ENCODE measurements at regions of chrX and their contacts with region 1.

Region 1: DNA sequence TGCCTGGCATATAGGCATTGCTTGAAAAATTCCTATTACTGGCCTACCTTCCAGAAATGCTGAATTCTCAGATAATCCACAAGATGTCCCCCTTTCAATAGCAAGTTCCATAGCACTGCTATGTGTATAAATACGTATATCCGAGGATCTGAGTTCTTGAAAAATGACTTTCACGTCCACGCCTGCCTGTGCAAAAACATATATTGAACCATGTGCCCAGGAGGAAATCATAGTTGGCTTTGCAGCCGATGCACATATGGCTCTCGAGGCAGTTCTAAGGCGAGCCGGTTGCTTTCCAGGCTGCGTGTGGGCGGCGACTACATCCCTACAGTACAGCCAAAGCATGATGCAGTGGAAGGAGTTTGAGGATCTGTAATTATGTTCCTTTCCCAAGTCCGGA is 55.4 kb upstream of the ESX1 start:
- DNase-seq: no peak
- H3K4me3 Mint-ChIP-seq: peak overlapping the region; percentile 51
- H3K27ac Mint-ChIP-seq: peak overlapping the region; percentile 56
- H3K4me1 Mint-ChIP-seq: peaks cover 17% of the 10 kb centered on the region
- H3K27me3 Mint-ChIP-seq: no peaks in the 10 kb centered on the region
- CTCF ChIP-seq: no peak

Region 2: GRCh38 chrX:104343428-104344129 is 33.5 kb after region 1 on chrX:
- CTCF ChIA-PET with region 1: interaction called, 3 read pairs
- intact Hi-C with region 1: loop called (anchors 1 kb)
- DNase-seq: peak; percentile 84
- H3K4me3 Mint-ChIP-seq: peak overlapping the region; percentile 20
- H3K27ac Mint-ChIP-seq: peak overlapping the region; percentile 87
- H3K4me1 Mint-ChIP-seq: peaks cover 50% of the 10 kb centered on the region
- H3K27me3 Mint-ChIP-seq: no peaks in the 10 kb centered on the region
- CTCF ChIP-seq: peak; percentile 46

Region 3: DNA sequence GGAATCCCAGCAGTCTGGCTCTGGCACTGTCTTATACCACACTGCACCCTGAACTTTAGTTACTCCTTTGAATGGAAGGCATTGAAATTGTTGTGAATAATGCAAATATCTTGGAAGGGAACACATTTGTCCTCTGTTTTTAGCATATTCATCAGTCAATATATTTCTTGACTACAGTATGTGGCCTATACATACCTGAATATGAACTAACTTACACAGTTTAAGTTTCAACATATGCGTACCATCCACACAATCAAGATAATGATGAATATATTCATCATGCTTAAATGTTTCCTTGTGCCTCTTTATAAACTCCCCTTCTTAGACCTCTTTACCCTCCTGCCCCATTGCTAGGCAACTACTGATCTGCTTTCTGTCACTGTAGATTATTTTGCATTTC is 90.3 kb after region 1 on chrX:
- CTCF ChIA-PET with region 1: no interaction called
- intact Hi-C with region 1: no loop called
- DNase-seq: no peak
- H3K4me3 Mint-ChIP-seq: no peak overlapping the region
- H3K27ac Mint-ChIP-seq: no peak overlapping the region
- H3K4me1 Mint-ChIP-seq: no peaks in the 10 kb centered on the region
- H3K27me3 Mint-ChIP-seq: no peaks in the 10 kb centered on the region
- CTCF ChIP-seq: no peak

Region 4: GRCh38 chrX:104565791-104566680 is 255.9 kb after region 1 on chrX and contains the start of gene IL1RAPL2:
- CTCF ChIA-PET with region 1: no interaction called
- intact Hi-C with region 1: loop called (anchors 10 kb)
- DNase-seq: peak; percentile 68
- H3K4me3 Mint-ChIP-seq: peak within 1 kb of the TSS; percentile 76
- H3K27ac Mint-ChIP-seq: no peak within 1 kb of the TSS
- H3K4me1 Mint-ChIP-seq: no peaks in the 10 kb centered on the region
- H3K27me3 Mint-ChIP-seq: peaks cover 74% of the 10 kb centered on the region
- CTCF ChIP-seq: peak; percentile 68
- total RNA-seq, gene IL1RAPL2: not detected in 2 replicates

Region 5: GRCh38 chrX:104712515-104712914 is 402.4 kb after region 1 on chrX:
- CTCF ChIA-PET with region 1: no interaction called
- intact Hi-C with region 1: loop called (anchors 10 kb)
- DNase-seq: no peak
- H3K4me3 Mint-ChIP-seq: no peak overlapping the region
- H3K27ac Mint-ChIP-seq: no peak overlapping the region
- H3K4me1 Mint-ChIP-seq: no peaks in the 10 kb centered on the region
- H3K27me3 Mint-ChIP-seq: peaks cover 22% of the 10 kb centered on the region
- CTCF ChIP-seq: no peak